OCI-LY7 (cell line): ENCODE measurements at regions of chr6 and their contacts with region 1.

Region 1: GRCh38 chr6:127276331-127276730 is 9.7 kb downstream of the RNF146 start:
- DNase-seq: no peak
- H3K4me3 ChIP-seq: no peak overlapping the region
- H3K27ac ChIP-seq: no peak overlapping the region
- H3K4me1 ChIP-seq: no peaks in the 10 kb centered on the region
- CTCF ChIP-seq: no peak

Region 2: GRCh38 chr6:127219869-127220268 is 56.5 kb before region 1 on chr6:
- CTCF ChIA-PET with region 1: no interaction called
- POLR2A ChIA-PET with region 1: no interaction called
- intact Hi-C with region 1: no loop called
- DNase-seq: no peak
- H3K4me3 ChIP-seq: no peak overlapping the region
- H3K27ac ChIP-seq: no peak overlapping the region
- H3K4me1 ChIP-seq: no peaks in the 10 kb centered on the region
- CTCF ChIP-seq: no peak

Region 3: GRCh38 chr6:127291495-127291894 is 15.2 kb after region 1 on chr6:
- CTCF ChIA-PET with region 1: no interaction called
- POLR2A ChIA-PET with region 1: interaction called, 13 read pairs
- intact Hi-C with region 1: no loop called
- DNase-seq: no peak
- H3K4me3 ChIP-seq: no peak overlapping the region
- H3K27ac ChIP-seq: no peak overlapping the region
- H3K4me1 ChIP-seq: no peaks in the 10 kb centered on the region
- CTCF ChIP-seq: no peak

Region 4: GRCh38 chr6:127446356-127446755 is 170.0 kb after region 1 on chr6:
- CTCF ChIA-PET with region 1: no interaction called
- POLR2A ChIA-PET with region 1: no interaction called
- intact Hi-C with region 1: no loop called
- DNase-seq: no peak
- H3K4me3 ChIP-seq: no peak overlapping the region
- H3K27ac ChIP-seq: no peak overlapping the region
- H3K4me1 ChIP-seq: no peaks in the 10 kb centered on the region
- CTCF ChIP-seq: no peak

Region 5: GRCh38 chr6:128889870-128890269 is 1613.5 kb after region 1 on chr6:
- CTCF ChIA-PET with region 1: no interaction called
- POLR2A ChIA-PET with region 1: no interaction called
- intact Hi-C with region 1: no loop called
- DNase-seq: no peak
- H3K4me3 ChIP-seq: no peak overlapping the region
- H3K27ac ChIP-seq: no peak overlapping the region
- H3K4me1 ChIP-seq: no peaks in the 10 kb centered on the region
- CTCF ChIP-seq: no peak